HepG2 (cell line): ENCODE measurements at regions of chr13 and their contacts with region 1.

Region 1: DNA sequence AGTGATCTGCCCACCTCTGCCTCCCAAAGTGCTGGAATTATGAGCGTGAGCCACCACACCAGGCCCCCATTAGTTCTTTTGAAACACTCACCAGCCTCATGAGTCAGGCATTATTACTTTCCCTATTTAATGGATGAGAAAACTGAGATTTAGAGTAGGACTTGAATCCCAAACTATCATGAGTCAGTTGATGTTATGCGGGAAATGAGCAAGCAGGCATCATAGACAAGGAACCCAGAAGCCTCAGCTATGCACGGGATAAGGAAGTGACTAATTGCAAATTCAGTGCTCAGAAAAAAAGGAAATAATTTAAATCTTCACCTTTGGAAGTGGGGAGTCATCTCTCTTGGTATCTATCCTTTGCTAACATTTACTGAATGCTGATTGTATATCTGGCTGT is 217.5 kb downstream of the ABCC4 start:
- DNase-seq: no peak
- ATAC-seq: no peak
- H3K4me3 ChIP-seq: no peak overlapping the region
- H3K27ac ChIP-seq: no peak overlapping the region
- H3K4me1 ChIP-seq: no peaks in the 10 kb centered on the region
- H3K27me3 ChIP-seq: no peaks in the 10 kb centered on the region
- CTCF ChIP-seq: no peak
- EP300 ChIP-seq: no peak
- POLR2A ChIP-seq: no peak
- RAD21 ChIP-seq: no peak

Region 2: DNA sequence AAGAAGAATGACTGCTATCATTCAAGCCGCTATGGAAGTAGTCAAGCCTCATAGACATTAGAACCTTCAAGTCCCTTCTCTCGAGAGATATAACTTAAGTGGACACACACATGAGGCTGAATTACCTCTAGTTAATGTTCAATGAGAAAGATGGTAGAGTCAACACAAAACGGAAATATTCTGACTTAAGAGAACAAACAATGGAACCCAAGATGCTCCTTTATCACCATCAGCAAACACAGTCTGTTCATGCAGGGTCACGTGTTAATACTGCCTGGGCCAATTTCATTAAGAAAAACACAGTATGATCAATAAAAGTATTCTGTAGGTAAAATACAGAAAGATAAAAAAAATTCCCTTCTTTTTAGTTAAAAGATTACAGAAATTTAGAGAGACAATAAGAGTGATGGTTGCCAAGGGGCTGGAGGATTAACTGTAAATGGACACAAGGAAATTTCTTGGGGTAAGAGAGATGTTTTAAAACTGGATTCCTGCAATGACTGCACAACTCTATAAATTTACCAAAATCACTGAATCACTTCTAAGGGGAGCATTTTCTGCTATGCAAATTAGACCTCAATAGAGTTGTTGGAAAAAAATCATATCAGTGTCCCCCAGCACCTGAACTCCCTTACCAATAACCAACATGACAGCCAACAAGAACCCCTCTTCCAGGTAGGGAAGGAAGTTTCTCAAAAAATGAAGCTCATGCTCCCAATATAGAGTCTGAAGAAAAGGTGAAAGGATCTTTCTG is 39.1 kb before region 1 on chr13:
- CTCF ChIA-PET with region 1: no interaction called
- POLR2A ChIA-PET with region 1: no interaction called
- in situ Hi-C with region 1: no loop called
- intact Hi-C with region 1: loop called (anchors 5 kb)
- DNase-seq: peak; percentile 69
- ATAC-seq: peak; percentile 69
- H3K4me3 ChIP-seq: no peak overlapping the region
- H3K27ac ChIP-seq: no peak overlapping the region
- H3K4me1 ChIP-seq: peaks cover 15% of the 10 kb centered on the region
- H3K27me3 ChIP-seq: no peaks in the 10 kb centered on the region
- CTCF ChIP-seq: no peak
- EP300 ChIP-seq: peak in 1 of 2 experiments; percentile 70; a peak in 2 of 4 replicates
- POLR2A ChIP-seq: no peak
- RAD21 ChIP-seq: no peak